WTC11 (cell line): ENCODE measurements at regions of chr11 and their contacts with region 1.

Region 1: DNA sequence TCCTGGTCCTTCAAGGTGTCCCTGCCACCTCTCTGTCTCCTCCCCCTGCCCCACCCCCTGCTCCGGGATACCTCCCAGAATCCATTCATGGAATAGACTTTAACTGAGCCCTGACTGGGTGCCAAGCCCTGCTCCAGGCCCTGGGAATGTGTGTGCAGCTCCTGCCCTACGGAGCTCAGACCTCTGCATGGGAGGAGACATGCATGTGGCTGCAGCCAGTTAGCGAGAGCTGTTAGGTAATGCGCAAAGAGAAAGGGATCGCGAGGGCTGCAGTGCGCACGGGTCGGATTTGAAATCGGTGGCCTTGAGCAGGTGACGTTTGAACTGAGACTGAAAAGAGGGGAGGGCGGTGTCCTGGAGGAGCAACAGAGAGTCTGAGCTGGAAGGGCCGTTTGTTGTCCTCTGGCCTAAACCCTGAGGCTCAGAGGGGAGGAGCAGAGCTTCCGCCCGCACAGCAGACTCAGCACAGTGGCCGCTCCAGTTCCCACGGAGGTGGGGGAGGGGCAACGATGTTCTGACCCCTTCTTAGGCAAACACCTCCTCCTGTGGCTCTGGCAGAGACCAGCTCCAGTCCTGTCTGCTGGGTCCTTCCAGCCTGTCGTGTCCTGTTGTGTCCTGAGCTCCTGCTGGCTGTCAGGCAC is 19.8 kb upstream of the LRRC10B start:
- DNase-seq: peak; percentile 76
- ATAC-seq: peak; percentile 60
- H3K4me3 Mint-ChIP-seq: peak overlapping the region; percentile 50
- H3K27ac Mint-ChIP-seq: peak overlapping the region; percentile 95
- H3K4me1 Mint-ChIP-seq: peaks cover 42% of the 10 kb centered on the region
- H3K27me3 Mint-ChIP-seq: peaks cover 7% of the 10 kb centered on the region; the same call in 1 of the 2 replicates
- CTCF ChIP-seq: no peak

Region 2: GRCh38 chr11:61503212-61503770 is 14.5 kb after region 1 on chr11:
- CTCF ChIA-PET with region 1: interaction called, 552 read pairs
- POLR2A ChIA-PET with region 1: interaction called, 3 read pairs
- DNase-seq: no peak
- ATAC-seq: no peak
- H3K4me3 Mint-ChIP-seq: no peak overlapping the region
- H3K27ac Mint-ChIP-seq: no peak overlapping the region
- H3K4me1 Mint-ChIP-seq: peaks cover 73% of the 10 kb centered on the region
- H3K27me3 Mint-ChIP-seq: peaks cover 31% of the 10 kb centered on the region
- CTCF ChIP-seq: no peak